Endothelial cell of umbilical vein (primary cell): ENCODE measurements at regions of chr22 and their contacts with region 1.

Region 1: GRCh38 chr22:31148953-31149627 is 8.8 kb upstream of the PLA2G3 start:
- DNase-seq: peak; percentile 84
- H3K4me3 ChIP-seq: no peak overlapping the region
- H3K27ac ChIP-seq: peak overlapping the region; percentile 62
- H3K4me1 ChIP-seq: peaks cover 8% of the 10 kb centered on the region
- H3K27me3 ChIP-seq: no peaks in the 10 kb centered on the region
- CTCF ChIP-seq: peak; percentile 97 to 99
- POLR2A ChIP-seq: no peak

Region 2: DNA sequence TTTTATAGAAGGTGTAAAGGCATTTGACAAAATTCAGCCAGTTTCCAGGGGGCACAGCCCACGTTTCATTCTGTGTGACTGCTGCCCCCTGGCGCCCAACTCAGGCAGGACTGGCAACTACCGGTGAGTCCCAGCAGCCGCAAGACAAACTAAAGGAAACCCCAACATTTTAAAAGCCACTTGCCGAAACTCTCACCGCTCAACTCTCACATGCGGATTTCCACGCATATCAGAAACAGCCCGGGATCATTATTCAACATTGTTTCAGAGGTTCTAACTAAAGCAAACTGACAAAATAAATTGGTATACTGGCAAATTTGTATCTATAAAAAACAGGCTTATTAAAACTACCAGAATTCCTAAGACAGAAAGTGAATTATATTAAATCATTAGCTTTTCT is 228.7 kb before region 1 on chr22:
- CTCF ChIA-PET with region 1: no interaction called
- POLR2A ChIA-PET with region 1: no interaction called
- dilution Hi-C with region 1: no loop called
- intact Hi-C with region 1: loop called (anchors 2 kb)
- DNase-seq: peak; percentile 62
- H3K4me3 ChIP-seq: no peak overlapping the region
- H3K27ac ChIP-seq: no peak overlapping the region
- H3K4me1 ChIP-seq: peaks cover 13% of the 10 kb centered on the region
- H3K27me3 ChIP-seq: no peaks in the 10 kb centered on the region
- CTCF ChIP-seq: peak; percentile 87 to 88
- POLR2A ChIP-seq: no peak

Region 3: DNA sequence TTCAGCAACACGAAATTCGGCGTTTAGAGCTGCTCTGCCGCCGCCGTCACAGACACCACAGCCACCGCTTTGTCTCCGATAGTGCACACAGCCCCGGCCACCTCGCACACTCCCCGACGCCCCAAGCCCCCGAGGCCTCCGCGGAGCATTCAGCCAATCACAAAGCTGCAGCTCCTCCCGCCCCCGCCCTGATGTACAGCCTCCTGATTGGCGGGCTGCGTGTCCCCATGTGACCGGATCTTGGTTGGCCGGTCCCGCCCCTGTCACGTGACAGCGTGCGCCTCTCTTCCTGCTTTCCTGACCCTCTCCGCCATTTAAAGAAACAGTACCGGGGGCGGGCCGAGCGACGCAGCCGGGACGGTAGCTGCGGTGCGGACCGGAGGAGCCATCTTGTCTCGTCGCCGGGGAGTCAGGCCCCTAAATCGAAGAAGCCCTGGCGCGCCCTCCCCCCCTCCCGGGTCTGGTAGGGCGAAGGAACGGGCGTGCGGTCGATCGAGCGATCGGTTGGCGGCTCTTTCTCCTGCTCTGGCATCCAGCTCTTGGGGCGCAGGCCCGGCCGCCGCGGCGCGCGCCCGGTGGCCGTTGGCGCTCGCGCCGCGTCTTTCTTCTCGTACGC is 180.1 kb before region 1 on chr22 and contains the start of gene TUG1:
- CTCF ChIA-PET with region 1: interaction called, 6 read pairs
- POLR2A ChIA-PET with region 1: no interaction called
- dilution Hi-C with region 1: no loop called
- intact Hi-C with region 1: loop called (anchors 5 kb)
- DNase-seq: peak; percentile 99
- H3K4me3 ChIP-seq: peak within 1 kb of the TSS; percentile 80 to 95 (median 88)
- H3K27ac ChIP-seq: peak within 1 kb of the TSS; percentile 83
- H3K4me1 ChIP-seq: peaks cover 23% of the 10 kb centered on the region
- H3K27me3 ChIP-seq: no peaks in the 10 kb centered on the region
- CTCF ChIP-seq: no peak
- POLR2A ChIP-seq: peak; percentile 58
- total RNA-seq, gene TUG1: 76.8 and 85.9 TPM in 2 replicates

Region 4: DNA sequence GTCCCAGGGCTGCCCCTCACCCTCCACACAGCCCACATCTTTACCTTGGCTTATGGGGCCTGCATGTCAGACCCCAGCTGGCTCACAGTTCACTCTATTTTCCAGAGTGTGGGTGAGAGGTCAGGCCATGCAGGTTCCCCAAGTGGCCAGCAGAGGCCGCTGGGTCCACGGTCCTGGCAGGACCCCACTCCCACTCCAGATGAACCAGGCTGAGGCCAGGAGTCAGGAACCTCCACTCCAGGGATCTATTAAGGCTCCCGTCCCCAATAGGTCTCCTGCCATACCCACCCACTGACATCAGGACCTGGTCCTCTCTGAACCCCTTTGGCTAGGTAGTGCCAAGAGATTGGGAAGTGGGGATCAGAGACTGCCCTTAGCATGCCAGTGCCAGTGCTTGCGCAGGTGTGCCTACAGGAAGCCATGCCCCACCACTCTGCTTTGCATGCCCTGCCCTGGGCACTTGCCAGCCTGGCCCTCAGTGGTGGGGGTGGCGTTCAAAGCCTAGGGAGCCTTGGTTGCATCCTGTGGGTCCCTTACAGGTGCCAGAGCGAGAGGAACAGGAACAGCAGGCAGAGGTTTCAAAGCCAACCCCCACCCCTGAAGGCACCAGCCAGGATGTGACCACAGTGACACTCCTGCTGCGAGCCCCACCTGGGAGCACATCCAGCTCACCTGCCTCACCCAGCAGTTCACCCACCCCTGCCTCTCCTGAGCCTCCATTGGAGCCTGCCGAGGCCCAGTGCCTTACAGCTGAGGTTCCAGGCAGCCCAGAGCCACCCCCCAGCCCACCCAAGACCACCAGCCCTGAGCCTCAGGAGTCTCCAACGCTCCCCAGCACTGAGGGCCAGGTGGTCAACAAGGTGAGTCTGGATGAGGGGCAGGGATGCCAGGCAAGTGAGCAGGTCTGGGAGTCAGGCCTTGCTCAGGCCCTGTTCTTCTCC is 59.7 kb before region 1 on chr22:
- CTCF ChIA-PET with region 1: interaction called, 17 read pairs
- POLR2A ChIA-PET with region 1: no interaction called
- dilution Hi-C with region 1: no loop called
- intact Hi-C with region 1: loop called (anchors 1 kb)
- DNase-seq: peak; percentile 34
- H3K4me3 ChIP-seq: no peak overlapping the region
- H3K27ac ChIP-seq: no peak overlapping the region
- H3K4me1 ChIP-seq: peaks cover 5% of the 10 kb centered on the region
- H3K27me3 ChIP-seq: no peaks in the 10 kb centered on the region
- CTCF ChIP-seq: peak; percentile 76 to 85
- POLR2A ChIP-seq: no peak